ENCODE measurements at regions of chr22 and their contacts with region 1.

Region 1: GRCh38 chr22:36311386-36312358 is 58.7 kb downstream of the APOL1 start:
- ATAC-seq: peak in 7 of 8 experiments; percentile 36 to 96 (median 90)
- H3K4me3 ChIP-seq: no peak overlapping the region
- H3K27ac ChIP-seq: no peak overlapping the region
- H3K4me1 ChIP-seq: no peaks in the 10 kb centered on the region

Region 2: GRCh38 chr22:36461669-36462649 is 150.3 kb after region 1 on chr22:
- in situ Hi-C with region 1: loop called in 4 of 9 experiments (anchors 10 to 25 kb)
- ATAC-seq: peak; percentile 19 to 86 (median 64)
- H3K4me3 ChIP-seq: no peak overlapping the region
- H3K27ac ChIP-seq: no peak overlapping the region
- H3K4me1 ChIP-seq: no peaks in the 10 kb centered on the region